HCT116 (cell line): ENCODE measurements at regions of chr3 and their contacts with region 1.

Region 1: DNA sequence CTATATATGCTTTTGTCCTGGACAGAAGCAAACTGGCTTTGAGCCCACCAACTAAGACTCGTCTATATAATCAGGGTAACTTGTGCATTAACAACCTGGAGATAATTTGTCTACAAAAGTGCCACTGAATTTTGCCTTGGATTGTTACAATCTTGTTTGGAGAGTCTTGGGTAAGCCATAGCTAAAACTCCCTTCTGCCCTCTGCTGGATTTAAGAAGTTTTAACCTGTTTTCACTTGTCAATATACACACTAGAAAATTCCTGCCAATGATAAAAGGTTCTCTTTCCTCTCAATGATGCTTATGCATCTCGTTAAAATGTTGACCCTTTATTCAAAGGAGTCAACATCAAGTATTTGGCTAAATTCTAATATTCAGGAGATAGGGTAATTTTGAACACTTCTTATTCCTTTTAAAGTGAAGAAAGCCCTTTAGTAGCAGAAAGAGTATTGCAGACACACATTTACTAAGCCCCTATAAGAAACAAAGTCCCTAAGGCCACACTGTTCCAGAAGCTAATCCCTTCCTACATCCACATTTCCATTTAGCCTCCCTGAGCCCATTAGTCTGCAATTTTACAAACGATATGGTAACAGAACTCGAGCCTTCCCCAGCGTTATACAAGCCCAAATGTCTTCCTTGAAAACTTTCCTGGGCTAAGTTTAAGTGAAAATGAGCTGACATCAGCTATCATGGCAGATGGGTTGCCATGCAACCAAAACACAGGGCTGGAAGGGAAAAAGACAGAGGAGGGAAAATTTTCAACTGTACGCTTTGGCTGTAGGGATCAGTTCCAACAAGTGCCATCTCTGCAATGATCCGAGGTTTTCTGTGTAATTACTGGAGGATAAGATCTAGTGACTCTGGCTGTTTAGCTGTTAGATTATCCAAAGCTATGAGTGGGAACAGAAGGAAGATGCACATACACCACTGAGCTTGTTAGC is 75.9 kb upstream of the FGF12 start:
- DNase-seq: peak; percentile 38
- ATAC-seq: peak; percentile 82
- H3K4me3 ChIP-seq: no peak overlapping the region
- H3K27ac ChIP-seq: no peak overlapping the region
- H3K4me1 ChIP-seq: no peaks in the 10 kb centered on the region
- H3K27me3 ChIP-seq: no peaks in the 10 kb centered on the region
- CTCF ChIP-seq: peak; percentile 52 to 68 (median 56)
- POLR2A ChIP-seq: no peak
- RAD21 ChIP-seq: peak; percentile 54

Region 2: DNA sequence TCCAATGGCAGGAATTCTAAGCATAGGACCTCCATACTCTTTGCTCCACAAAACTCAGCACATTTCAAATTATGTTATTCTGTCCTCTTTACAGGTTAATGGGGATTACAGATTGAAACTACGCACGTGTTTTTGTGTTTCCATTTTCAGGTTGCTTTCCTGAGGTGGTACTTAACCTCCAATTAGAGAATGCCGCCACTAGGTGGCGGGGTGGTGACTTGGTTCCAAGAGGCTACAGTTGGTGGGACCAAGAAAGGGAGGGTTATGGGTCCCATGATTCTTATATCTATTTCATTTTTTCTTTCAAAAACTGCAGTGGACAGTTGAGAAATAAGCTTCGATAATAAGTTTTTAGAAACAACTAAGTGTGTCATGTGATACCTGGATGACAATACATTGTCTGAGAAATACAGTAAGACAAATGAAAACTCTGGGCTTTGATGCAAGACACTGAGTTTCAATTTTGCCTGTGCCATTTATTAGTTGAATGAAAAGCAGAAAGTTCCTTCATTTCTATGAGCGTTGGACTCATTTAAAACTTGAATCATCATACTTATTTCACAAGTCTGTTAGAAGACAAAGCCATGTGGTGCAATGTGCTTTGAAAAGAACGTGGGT is 614.9 kb before region 1 on chr3:
- CTCF ChIA-PET with region 1: no interaction called
- POLR2A ChIA-PET with region 1: no interaction called
- RAD21 ChIA-PET with region 1: no interaction called
- intact Hi-C with region 1: no loop called
- DNase-seq: peak; percentile 47
- ATAC-seq: peak; percentile 95
- H3K4me3 ChIP-seq: no peak overlapping the region
- H3K27ac ChIP-seq: no peak overlapping the region
- H3K4me1 ChIP-seq: no peaks in the 10 kb centered on the region
- H3K27me3 ChIP-seq: no peaks in the 10 kb centered on the region
- CTCF ChIP-seq: peak; percentile 56 to 84 (median 80)
- POLR2A ChIP-seq: no peak
- RAD21 ChIP-seq: peak; percentile 57

Region 3: GRCh38 chr3:192467230-192468140 is 335.7 kb before region 1 on chr3:
- CTCF ChIA-PET with region 1: interaction called, 3 read pairs
- POLR2A ChIA-PET with region 1: no interaction called
- RAD21 ChIA-PET with region 1: no interaction called
- intact Hi-C with region 1: loop called (anchors 1 kb)
- DNase-seq: peak; percentile 37
- ATAC-seq: peak; percentile 97
- H3K4me3 ChIP-seq: no peak overlapping the region
- H3K27ac ChIP-seq: no peak overlapping the region
- H3K4me1 ChIP-seq: no peaks in the 10 kb centered on the region
- H3K27me3 ChIP-seq: peaks cover 56% of the 10 kb centered on the region
- CTCF ChIP-seq: peak; percentile 61 to 94 (median 81)
- POLR2A ChIP-seq: no peak
- RAD21 ChIP-seq: peak; percentile 86